Endothelial cell of umbilical vein (primary cell): ENCODE measurements at regions of chr7 and their contacts with region 1.

Region 1: DNA sequence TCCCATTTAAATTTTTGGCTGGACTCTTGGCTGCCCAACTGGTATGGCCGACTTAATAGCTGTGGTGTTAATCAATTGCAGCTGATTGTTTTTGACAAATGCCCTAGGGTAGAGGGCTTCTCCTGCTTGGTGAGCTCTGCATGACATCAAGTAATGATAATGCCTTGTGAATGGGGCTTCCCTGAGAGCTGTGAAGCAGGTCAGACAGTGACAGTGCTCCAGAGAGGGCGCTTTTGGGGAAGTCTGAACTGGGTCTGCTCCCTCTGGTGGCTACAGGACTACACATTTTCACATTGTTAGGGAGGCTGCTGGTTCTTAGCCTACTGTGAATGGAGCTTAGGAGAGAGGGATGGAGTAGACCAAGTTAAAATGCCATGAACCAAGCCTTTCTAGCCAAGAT is 98.8 kb downstream of the SDK1 start:
- DNase-seq: peak; percentile 6
- H3K4me3 ChIP-seq: no peak overlapping the region
- H3K27ac ChIP-seq: no peak overlapping the region
- H3K4me1 ChIP-seq: no peaks in the 10 kb centered on the region
- H3K27me3 ChIP-seq: no peaks in the 10 kb centered on the region
- CTCF ChIP-seq: peak; percentile 10 to 34
- POLR2A ChIP-seq: no peak

Region 2: GRCh38 chr7:3309140-3309539 is 90.7 kb before region 1 on chr7:
- CTCF ChIA-PET with region 1: no interaction called
- POLR2A ChIA-PET with region 1: no interaction called
- dilution Hi-C with region 1: no loop called
- intact Hi-C with region 1: no loop called
- DNase-seq: no peak
- H3K4me3 ChIP-seq: no peak overlapping the region
- H3K27ac ChIP-seq: no peak overlapping the region
- H3K4me1 ChIP-seq: no peaks in the 10 kb centered on the region
- H3K27me3 ChIP-seq: peaks cover 8% of the 10 kb centered on the region in 2 experiments
- CTCF ChIP-seq: no peak
- POLR2A ChIP-seq: no peak

Region 3: GRCh38 chr7:3673524-3673923 is 273.7 kb after region 1 on chr7:
- CTCF ChIA-PET with region 1: interaction called, 3 read pairs
- POLR2A ChIA-PET with region 1: no interaction called
- dilution Hi-C with region 1: no loop called
- intact Hi-C with region 1: loop called (anchors 10 kb)
- DNase-seq: peak; percentile 25
- H3K4me3 ChIP-seq: no peak overlapping the region
- H3K27ac ChIP-seq: no peak overlapping the region
- H3K4me1 ChIP-seq: no peaks in the 10 kb centered on the region
- H3K27me3 ChIP-seq: no peaks in the 10 kb centered on the region
- CTCF ChIP-seq: peak; percentile 37 to 54
- POLR2A ChIP-seq: no peak